T-cell (primary cell): ENCODE measurements at regions of chr19 and their contacts with region 1.

Region 1: DNA sequence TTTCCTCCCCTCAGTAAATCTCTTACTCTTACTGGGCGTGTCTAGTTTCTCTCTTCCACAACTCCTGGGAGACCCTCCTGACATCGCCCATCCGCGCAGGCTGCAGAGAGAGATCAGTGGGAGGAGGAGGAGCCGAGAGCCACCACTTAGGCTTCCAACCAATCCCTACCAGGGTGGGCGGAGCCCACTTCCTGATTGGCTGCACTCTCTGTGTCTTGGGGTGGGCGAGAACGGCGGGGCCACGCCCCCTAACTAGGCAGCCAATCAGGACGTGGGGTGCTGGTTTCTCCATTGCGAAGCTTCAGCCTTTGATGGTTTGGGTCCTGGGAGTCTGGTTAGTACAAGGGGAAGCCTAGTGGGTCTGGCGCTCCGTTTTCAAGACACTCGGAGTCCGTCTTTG is at the start of gene PMIS2:
- DNase-seq: peak in 3 of 35 experiments; percentile 4 to 29 (median 10)
- ATAC-seq: peak in 1 of 4 experiments; percentile 62
- H3K4me3 ChIP-seq: no peak within 1 kb of the TSS
- H3K4me3 Mint-ChIP-seq: no peak within 1 kb of the TSS
- H3K27ac ChIP-seq: no peak within 1 kb of the TSS
- H3K27ac Mint-ChIP-seq: no peak within 1 kb of the TSS
- H3K4me1 ChIP-seq: no peaks in the 10 kb centered on the region
- H3K4me1 Mint-ChIP-seq: no peaks in the 10 kb centered on the region
- H3K27me3 ChIP-seq: peaks cover 0 to 29% of the 10 kb centered on the region in 2 experiments
- H3K27me3 Mint-ChIP-seq: peaks cover 13 to 23% of the 10 kb centered on the region in 2 donors
- total RNA-seq, gene PMIS2: not detected

Region 2: GRCh38 chr19:35508129-35508528 is 77.7 kb before region 1 on chr19:
- CTCF ChIA-PET with region 1: interaction called in 1 of 2 experiments, 10 read pairs
- POLR2A ChIA-PET with region 1: no interaction called
- DNase-seq: no peak
- ATAC-seq: no peak
- H3K4me3 ChIP-seq: no peak overlapping the region
- H3K4me3 Mint-ChIP-seq: no peak overlapping the region
- H3K27ac ChIP-seq: no peak overlapping the region
- H3K27ac Mint-ChIP-seq: no peak overlapping the region
- H3K4me1 ChIP-seq: peaks cover 0 to 22% of the 10 kb centered on the region in 2 experiments
- H3K4me1 Mint-ChIP-seq: peaks cover 15 to 20% (median 17%) of the 10 kb centered on the region in 3 donors
- H3K27me3 ChIP-seq: peaks cover 2 to 56% of the 10 kb centered on the region in 2 experiments
- H3K27me3 Mint-ChIP-seq: peaks cover 26 to 54% of the 10 kb centered on the region in 2 donors

Region 3: DNA sequence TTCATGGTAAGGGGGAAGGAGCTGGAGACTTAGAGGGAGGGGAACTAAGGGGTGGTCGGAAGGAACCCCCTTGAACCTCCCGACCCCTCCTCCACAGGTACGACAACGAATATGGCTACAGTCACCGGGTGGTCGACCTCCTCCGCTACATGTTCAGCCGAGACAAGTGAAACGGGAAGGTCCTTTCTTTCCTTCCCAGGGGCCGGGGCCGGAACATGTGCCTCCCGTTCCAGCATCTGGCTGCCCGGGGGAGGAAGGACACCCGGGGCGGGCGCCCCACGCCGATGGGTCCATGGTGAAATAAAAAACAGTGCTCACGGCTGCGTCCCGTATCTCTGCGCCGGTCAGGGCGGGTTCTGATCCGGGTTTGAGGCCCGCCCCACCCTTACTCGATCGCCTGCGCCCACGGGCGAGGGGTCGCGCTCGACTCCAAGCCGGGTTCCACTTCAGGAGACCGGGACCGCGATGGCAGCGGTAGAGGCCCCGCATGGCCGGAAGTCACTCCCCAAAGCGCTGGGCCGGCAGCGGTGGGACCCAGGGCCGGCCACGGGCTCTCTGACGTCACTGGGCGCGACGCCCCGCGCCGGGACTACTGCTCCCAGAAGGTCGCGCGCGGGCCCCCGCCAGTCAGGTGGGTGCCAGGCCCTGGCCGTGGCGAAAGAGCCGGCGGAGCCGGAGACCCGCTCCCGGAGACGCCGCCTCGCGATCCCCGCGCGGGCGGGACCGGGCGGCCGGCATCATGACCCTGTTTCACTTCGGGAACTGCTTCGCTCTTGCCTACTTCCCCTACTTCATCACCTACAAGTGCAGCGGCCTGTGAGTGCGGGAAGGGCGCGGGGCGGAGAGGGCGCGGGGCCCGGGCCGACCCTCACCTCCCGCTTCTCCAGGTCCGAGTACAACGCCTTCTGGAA is 40.6 kb before region 1 on chr19 and contains the start of gene TMEM147:
- CTCF ChIA-PET with region 1: no interaction called
- POLR2A ChIA-PET with region 1: no interaction called
- DNase-seq: peak; percentile 34 to 81 (median 64)
- ATAC-seq: peak; percentile 90 to 92 (median 92)
- H3K4me3 ChIP-seq: peak within 1 kb of the TSS; percentile 75 to 88
- H3K4me3 Mint-ChIP-seq: peak within 1 kb of the TSS; percentile 83 to 89 (median 84)
- H3K27ac ChIP-seq: peak within 1 kb of the TSS; percentile 88
- H3K27ac Mint-ChIP-seq: peak within 1 kb of the TSS; percentile 86 to 87
- H3K4me1 ChIP-seq: peaks cover 10 to 38% of the 10 kb centered on the region in 2 experiments
- H3K4me1 Mint-ChIP-seq: peaks cover 35 to 40% (median 39%) of the 10 kb centered on the region in 3 donors
- H3K27me3 ChIP-seq: no peaks in the 10 kb centered on the region
- H3K27me3 Mint-ChIP-seq: no peaks in the 10 kb centered on the region
- total RNA-seq, gene TMEM147: 27.5 to 46.6 (median 44.2) TPM